Caco-2 (cell line): ENCODE measurements at regions of chr10 and their contacts with region 1.

Region 1: GRCh38 chr10:45672181-45673073 is at the start of gene ZFAND4:
- DNase-seq: peak; percentile 99 to 100
- H3K4me3 ChIP-seq: peak within 1 kb of the TSS; percentile 62
- H3K4me3 Mint-ChIP-seq: peak within 1 kb of the TSS; percentile 80
- H3K27ac Mint-ChIP-seq: peak within 1 kb of the TSS; percentile 55
- H3K4me1 ChIP-seq: 0 out of 2 replicates have a peak, but pooled peaks cover 5% of the 10 kb centered on the region
- H3K4me1 Mint-ChIP-seq: peaks cover 7% of the 10 kb centered on the region
- H3K27me3 ChIP-seq: no peaks in the 10 kb centered on the region
- H3K27me3 Mint-ChIP-seq: peaks cover 12% of the 10 kb centered on the region
- CTCF ChIP-seq: peak; percentile 79 to 80
- total RNA-seq, gene ZFAND4: 8.8 and 9.3 TPM in 2 replicates

Region 2: GRCh38 chr10:44083719-44084400 is 1588.6 kb before region 1 on chr10:
- CTCF ChIA-PET with region 1: no interaction called
- POLR2A ChIA-PET with region 1: no interaction called
- intact Hi-C with region 1: no loop called
- DNase-seq: no peak
- H3K4me3 ChIP-seq: no peak overlapping the region
- H3K4me3 Mint-ChIP-seq: no peak overlapping the region
- H3K27ac Mint-ChIP-seq: no peak overlapping the region
- H3K4me1 ChIP-seq: no peaks in the 10 kb centered on the region
- H3K4me1 Mint-ChIP-seq: no peaks in the 10 kb centered on the region
- H3K27me3 ChIP-seq: no peaks in the 10 kb centered on the region; the same call in 1 of the 2 replicates
- H3K27me3 Mint-ChIP-seq: peaks cover 8% of the 10 kb centered on the region
- CTCF ChIP-seq: no peak

Region 3: DNA sequence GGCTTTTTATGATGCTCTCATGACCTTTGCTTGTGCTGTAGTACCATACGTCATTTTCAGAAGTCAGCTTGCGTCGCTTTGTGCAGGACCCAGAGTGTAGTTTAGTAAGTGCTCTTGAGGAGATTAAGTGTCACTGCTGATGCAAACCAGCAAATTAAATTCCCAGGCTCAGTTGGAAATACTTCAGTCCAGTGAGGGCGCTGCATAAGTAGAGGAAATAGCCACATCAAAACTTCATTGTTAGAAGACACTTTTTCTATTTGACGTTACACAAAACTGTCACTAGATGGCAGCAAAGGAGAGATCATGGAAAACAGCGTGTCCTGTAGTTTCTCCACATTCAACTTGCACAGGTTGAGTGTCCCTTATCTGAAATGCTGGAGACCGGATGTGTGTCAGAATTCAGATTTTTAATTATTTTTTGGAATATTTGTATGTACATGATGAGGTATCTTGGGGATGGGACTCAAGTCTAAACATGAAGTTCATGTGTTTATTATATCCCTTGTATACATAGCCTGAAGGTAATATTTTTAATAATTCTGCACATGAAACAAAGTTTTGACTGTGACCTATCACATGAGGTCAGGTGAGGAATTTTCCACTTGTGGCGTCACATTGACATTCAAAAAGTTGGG is 663.8 kb before region 1 on chr10:
- CTCF ChIA-PET with region 1: no interaction called
- POLR2A ChIA-PET with region 1: no interaction called
- intact Hi-C with region 1: loop called (anchors 5 kb)
- DNase-seq: peak in 1 of 2 experiments; percentile 83
- H3K4me3 ChIP-seq: no peak overlapping the region
- H3K4me3 Mint-ChIP-seq: no peak overlapping the region
- H3K27ac Mint-ChIP-seq: no peak overlapping the region
- H3K4me1 ChIP-seq: peaks cover 5% of the 10 kb centered on the region; the same call in 1 of the 2 replicates
- H3K4me1 Mint-ChIP-seq: peaks cover 2% of the 10 kb centered on the region
- H3K27me3 ChIP-seq: no peaks in the 10 kb centered on the region
- H3K27me3 Mint-ChIP-seq: no peaks in the 10 kb centered on the region
- CTCF ChIP-seq: peak; percentile 87 to 90

Region 4: GRCh38 chr10:45082176-45082575 is 590.3 kb before region 1 on chr10:
- CTCF ChIA-PET with region 1: no interaction called
- POLR2A ChIA-PET with region 1: no interaction called
- intact Hi-C with region 1: no loop called
- DNase-seq: no peak
- H3K4me3 ChIP-seq: no peak overlapping the region
- H3K4me3 Mint-ChIP-seq: no peak overlapping the region
- H3K27ac Mint-ChIP-seq: no peak overlapping the region
- H3K4me1 ChIP-seq: no peaks in the 10 kb centered on the region
- H3K4me1 Mint-ChIP-seq: no peaks in the 10 kb centered on the region
- H3K27me3 ChIP-seq: no peaks in the 10 kb centered on the region
- H3K27me3 Mint-ChIP-seq: peaks cover 17% of the 10 kb centered on the region
- CTCF ChIP-seq: no peak

Region 5: GRCh38 chr10:45249978-45250693 is 422.3 kb before region 1 on chr10:
- CTCF ChIA-PET with region 1: interaction called, 7 read pairs
- POLR2A ChIA-PET with region 1: interaction called, 3 read pairs
- intact Hi-C with region 1: loop called (anchors 5 kb)
- DNase-seq: peak in 1 of 2 experiments; percentile 67
- H3K4me3 ChIP-seq: no peak overlapping the region
- H3K4me3 Mint-ChIP-seq: peak overlapping the region; percentile 48
- H3K27ac Mint-ChIP-seq: no peak overlapping the region
- H3K4me1 ChIP-seq: no peaks in the 10 kb centered on the region
- H3K4me1 Mint-ChIP-seq: no peaks in the 10 kb centered on the region
- H3K27me3 ChIP-seq: no peaks in the 10 kb centered on the region
- H3K27me3 Mint-ChIP-seq: peaks cover 25% of the 10 kb centered on the region
- CTCF ChIP-seq: peak; percentile 67 to 87

Region 6: DNA sequence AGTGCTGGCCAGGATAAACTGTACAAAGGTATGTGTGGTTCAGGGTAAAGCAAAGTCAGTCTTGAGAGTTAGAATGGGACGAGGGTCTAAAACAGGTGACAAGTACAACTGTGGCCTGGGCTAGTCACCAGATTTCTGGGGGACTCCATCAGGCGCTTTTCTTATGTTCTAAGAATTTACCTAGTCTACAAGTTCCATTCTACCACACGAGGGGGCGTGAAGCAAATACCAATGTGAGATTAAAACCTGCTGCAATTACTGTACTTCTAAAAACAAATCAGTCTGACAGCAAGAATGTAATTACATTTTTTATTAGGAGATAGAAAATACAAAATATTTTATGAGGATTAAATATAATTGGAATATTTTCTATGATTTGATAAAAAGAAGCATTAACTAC is 152.0 kb before region 1 on chr10:
- CTCF ChIA-PET with region 1: no interaction called
- POLR2A ChIA-PET with region 1: no interaction called
- intact Hi-C with region 1: loop called (anchors 1 kb)
- DNase-seq: no peak
- H3K4me3 ChIP-seq: no peak overlapping the region
- H3K4me3 Mint-ChIP-seq: no peak overlapping the region
- H3K27ac Mint-ChIP-seq: no peak overlapping the region
- H3K4me1 ChIP-seq: no peaks in the 10 kb centered on the region
- H3K4me1 Mint-ChIP-seq: no peaks in the 10 kb centered on the region
- H3K27me3 ChIP-seq: no peaks in the 10 kb centered on the region
- H3K27me3 Mint-ChIP-seq: peaks cover 6% of the 10 kb centered on the region
- CTCF ChIP-seq: peak in 1 of 2 experiments; percentile 17

Region 7: GRCh38 chr10:45594276-45595106 is 77.9 kb before region 1 on chr10:
- CTCF ChIA-PET with region 1: no interaction called
- POLR2A ChIA-PET with region 1: no interaction called
- intact Hi-C with region 1: loop called (anchors 1 kb)
- DNase-seq: peak; percentile 95 to 97
- H3K4me3 ChIP-seq: peak overlapping the region; percentile 89
- H3K4me3 Mint-ChIP-seq: peak overlapping the region; percentile 73
- H3K27ac Mint-ChIP-seq: peak overlapping the region; percentile 54
- H3K4me1 ChIP-seq: no peaks in the 10 kb centered on the region
- H3K4me1 Mint-ChIP-seq: peaks cover 14% of the 10 kb centered on the region
- H3K27me3 ChIP-seq: 0 out of 2 replicates have a peak, but pooled peaks cover 1% of the 10 kb centered on the region
- H3K27me3 Mint-ChIP-seq: peaks cover 5% of the 10 kb centered on the region
- CTCF ChIP-seq: no peak

Region 8: GRCh38 chr10:45607276-45607675 is 65.2 kb before region 1 on chr10:
- CTCF ChIA-PET with region 1: no interaction called
- POLR2A ChIA-PET with region 1: no interaction called
- intact Hi-C with region 1: no loop called
- DNase-seq: no peak
- H3K4me3 ChIP-seq: no peak overlapping the region
- H3K4me3 Mint-ChIP-seq: no peak overlapping the region
- H3K27ac Mint-ChIP-seq: no peak overlapping the region
- H3K4me1 ChIP-seq: no peaks in the 10 kb centered on the region
- H3K4me1 Mint-ChIP-seq: no peaks in the 10 kb centered on the region
- H3K27me3 ChIP-seq: no peaks in the 10 kb centered on the region
- H3K27me3 Mint-ChIP-seq: peaks cover 7% of the 10 kb centered on the region
- CTCF ChIP-seq: no peak

Region 9: GRCh38 chr10:45640941-45641340 is 31.5 kb before region 1 on chr10:
- CTCF ChIA-PET with region 1: no interaction called
- POLR2A ChIA-PET with region 1: no interaction called
- intact Hi-C with region 1: loop called (anchors 1 kb)
- DNase-seq: no peak
- H3K4me3 ChIP-seq: no peak overlapping the region
- H3K4me3 Mint-ChIP-seq: no peak overlapping the region
- H3K27ac Mint-ChIP-seq: no peak overlapping the region
- H3K4me1 ChIP-seq: no peaks in the 10 kb centered on the region
- H3K4me1 Mint-ChIP-seq: no peaks in the 10 kb centered on the region
- H3K27me3 ChIP-seq: no peaks in the 10 kb centered on the region
- H3K27me3 Mint-ChIP-seq: no peaks in the 10 kb centered on the region
- CTCF ChIP-seq: no peak